GM12878 (cell line): ENCODE measurements at regions of chr18 and their contacts with region 1.

Region 1: GRCh38 chr18:22933206-22933957 is at the start of gene RBBP8:
- DNase-seq: peak; percentile 36
- ATAC-seq: peak; percentile 85
- H3K4me3 ChIP-seq: peak within 1 kb of the TSS; percentile 86
- H3K27ac ChIP-seq: peak within 1 kb of the TSS; percentile 92
- H3K4me1 ChIP-seq: peaks cover 6% of the 10 kb centered on the region
- H3K27me3 ChIP-seq: no peaks in the 10 kb centered on the region
- CTCF ChIP-seq: no peak
- EP300 ChIP-seq: no peak
- POLR2A ChIP-seq: peak; percentile 80
- RAD21 ChIP-seq: no peak
- polyA plus RNA-seq, gene RBBP8: 49.4 to 59.5 TPM

Region 2: GRCh38 chr18:22800551-22800951 is 132.8 kb before region 1 on chr18:
- CTCF ChIA-PET with region 1: interaction called, 23 read pairs
- POLR2A ChIA-PET with region 1: no interaction called
- RAD21 ChIA-PET with region 1: interaction called, 5 read pairs
- SMC1A ChIA-PET with region 1: interaction called, 7 read pairs
- in situ Hi-C with region 1: no loop called
- intact Hi-C with region 1: loop called (anchors 5 kb)
- DNase-seq: no peak
- ATAC-seq: no peak
- H3K4me3 ChIP-seq: no peak overlapping the region
- H3K27ac ChIP-seq: no peak overlapping the region
- H3K4me1 ChIP-seq: no peaks in the 10 kb centered on the region; the same call in 1 of the 2 replicates
- H3K27me3 ChIP-seq: no peaks in the 10 kb centered on the region
- CTCF ChIP-seq: no peak
- EP300 ChIP-seq: no peak
- POLR2A ChIP-seq: no peak
- RAD21 ChIP-seq: no peak

Region 3: GRCh38 chr18:22900558-22901238 is 32.7 kb before region 1 on chr18:
- CTCF ChIA-PET with region 1: no interaction called
- POLR2A ChIA-PET with region 1: no interaction called
- RAD21 ChIA-PET with region 1: no interaction called
- SMC1A ChIA-PET with region 1: no interaction called
- in situ Hi-C with region 1: no loop called
- intact Hi-C with region 1: no loop called
- DNase-seq: no peak
- ATAC-seq: no peak
- H3K4me3 ChIP-seq: no peak overlapping the region
- H3K27ac ChIP-seq: no peak overlapping the region
- H3K4me1 ChIP-seq: no peaks in the 10 kb centered on the region
- H3K27me3 ChIP-seq: no peaks in the 10 kb centered on the region
- CTCF ChIP-seq: no peak
- EP300 ChIP-seq: no peak
- POLR2A ChIP-seq: no peak
- RAD21 ChIP-seq: no peak

Region 4: DNA sequence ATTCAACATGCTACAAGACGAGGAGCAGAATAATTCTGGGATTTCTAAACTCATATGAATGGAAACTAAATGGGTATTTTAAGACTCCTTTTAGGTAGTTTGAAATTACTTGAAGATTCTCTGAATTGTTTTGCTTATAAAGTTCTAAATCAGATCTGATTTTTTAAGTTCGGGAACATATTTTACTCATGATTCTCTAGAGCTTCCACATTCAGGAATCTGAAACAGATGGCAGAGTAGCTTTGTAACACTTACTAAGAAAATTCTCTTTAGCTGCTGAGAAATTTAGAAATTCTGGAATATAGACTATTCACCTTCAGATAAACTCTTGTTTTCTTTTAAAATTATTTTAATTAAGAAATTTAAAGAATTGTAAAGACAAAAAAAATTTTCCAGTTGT is 13.5 kb after region 1 on chr18:
- CTCF ChIA-PET with region 1: interaction called, 8 read pairs
- POLR2A ChIA-PET with region 1: no interaction called
- RAD21 ChIA-PET with region 1: interaction called, 8 read pairs
- SMC1A ChIA-PET with region 1: interaction called, 11 read pairs
- in situ Hi-C with region 1: no loop called
- intact Hi-C with region 1: no loop called
- DNase-seq: no peak
- ATAC-seq: no peak
- H3K4me3 ChIP-seq: no peak overlapping the region
- H3K27ac ChIP-seq: no peak overlapping the region
- H3K4me1 ChIP-seq: peaks cover 4% of the 10 kb centered on the region; the same call in 1 of the 2 replicates
- H3K27me3 ChIP-seq: no peaks in the 10 kb centered on the region
- CTCF ChIP-seq: no peak
- EP300 ChIP-seq: no peak
- POLR2A ChIP-seq: no peak
- RAD21 ChIP-seq: no peak

Region 5: GRCh38 chr18:22977847-22978701 is 44.7 kb after region 1 on chr18:
- CTCF ChIA-PET with region 1: interaction called, 103 read pairs
- POLR2A ChIA-PET with region 1: interaction called, 11 read pairs
- RAD21 ChIA-PET with region 1: interaction called, 52 read pairs
- SMC1A ChIA-PET with region 1: interaction called, 74 read pairs
- in situ Hi-C with region 1: no loop called
- intact Hi-C with region 1: loop called (anchors 2 kb)
- DNase-seq: no peak
- ATAC-seq: peak; percentile 82
- H3K4me3 ChIP-seq: no peak overlapping the region
- H3K27ac ChIP-seq: peak overlapping the region; percentile 37; the same call in 1 of the 2 replicates
- H3K4me1 ChIP-seq: no peaks in the 10 kb centered on the region
- H3K27me3 ChIP-seq: no peaks in the 10 kb centered on the region
- CTCF ChIP-seq: no peak; a peak in 1 of 6 replicates
- EP300 ChIP-seq: no peak
- POLR2A ChIP-seq: no peak
- RAD21 ChIP-seq: peak; percentile 5; the same call in 1 of the 2 replicates

Region 6: DNA sequence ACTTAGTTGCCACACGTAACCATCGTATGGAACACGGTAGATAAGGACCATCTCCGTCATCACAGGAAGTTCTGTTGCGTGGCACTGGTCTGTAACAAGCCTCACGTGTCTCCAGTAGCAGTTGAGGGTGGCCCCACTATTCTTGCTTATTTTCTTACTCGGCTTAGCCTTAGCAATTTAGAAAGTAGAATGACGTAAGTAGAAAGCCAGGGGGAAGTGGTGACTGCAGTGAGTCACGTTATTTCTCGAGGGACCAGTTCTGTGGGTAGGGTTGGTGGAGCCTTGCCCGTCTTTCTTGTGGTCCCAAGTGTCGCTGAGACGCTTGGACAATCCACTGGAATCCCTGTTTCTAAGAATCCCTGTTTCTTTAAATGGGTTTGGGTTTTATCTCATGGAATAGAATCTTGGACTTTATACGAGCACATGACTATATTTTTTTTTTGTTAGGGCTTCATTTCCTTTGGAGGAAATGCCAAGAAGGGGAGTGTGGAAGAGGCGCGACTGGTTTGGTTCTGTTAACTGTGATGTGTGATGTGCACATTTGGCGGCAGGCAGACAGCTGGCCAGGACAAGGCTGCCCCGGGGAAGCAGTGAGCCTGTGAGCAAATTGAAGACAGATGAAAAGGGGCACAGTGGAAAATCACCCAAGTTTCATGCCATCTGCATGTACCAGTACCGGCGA is 298.1 kb after region 1 on chr18:
- CTCF ChIA-PET with region 1: no interaction called
- POLR2A ChIA-PET with region 1: no interaction called
- RAD21 ChIA-PET with region 1: interaction called, 5 read pairs
- SMC1A ChIA-PET with region 1: no interaction called
- in situ Hi-C with region 1: no loop called
- intact Hi-C with region 1: loop called (anchors 5 kb)
- DNase-seq: peak; percentile 99
- ATAC-seq: peak; percentile 81
- H3K4me3 ChIP-seq: no peak overlapping the region
- H3K27ac ChIP-seq: peak overlapping the region; percentile 95
- H3K4me1 ChIP-seq: peaks cover 55% of the 10 kb centered on the region
- H3K27me3 ChIP-seq: no peaks in the 10 kb centered on the region
- CTCF ChIP-seq: no peak
- EP300 ChIP-seq: peak; percentile 100
- POLR2A ChIP-seq: peak; percentile 51
- RAD21 ChIP-seq: no peak; the same call in 1 of the 2 replicates